GM10248 (cell line): ENCODE measurements at regions of chr18 and their contacts with region 1.

Region 1: DNA sequence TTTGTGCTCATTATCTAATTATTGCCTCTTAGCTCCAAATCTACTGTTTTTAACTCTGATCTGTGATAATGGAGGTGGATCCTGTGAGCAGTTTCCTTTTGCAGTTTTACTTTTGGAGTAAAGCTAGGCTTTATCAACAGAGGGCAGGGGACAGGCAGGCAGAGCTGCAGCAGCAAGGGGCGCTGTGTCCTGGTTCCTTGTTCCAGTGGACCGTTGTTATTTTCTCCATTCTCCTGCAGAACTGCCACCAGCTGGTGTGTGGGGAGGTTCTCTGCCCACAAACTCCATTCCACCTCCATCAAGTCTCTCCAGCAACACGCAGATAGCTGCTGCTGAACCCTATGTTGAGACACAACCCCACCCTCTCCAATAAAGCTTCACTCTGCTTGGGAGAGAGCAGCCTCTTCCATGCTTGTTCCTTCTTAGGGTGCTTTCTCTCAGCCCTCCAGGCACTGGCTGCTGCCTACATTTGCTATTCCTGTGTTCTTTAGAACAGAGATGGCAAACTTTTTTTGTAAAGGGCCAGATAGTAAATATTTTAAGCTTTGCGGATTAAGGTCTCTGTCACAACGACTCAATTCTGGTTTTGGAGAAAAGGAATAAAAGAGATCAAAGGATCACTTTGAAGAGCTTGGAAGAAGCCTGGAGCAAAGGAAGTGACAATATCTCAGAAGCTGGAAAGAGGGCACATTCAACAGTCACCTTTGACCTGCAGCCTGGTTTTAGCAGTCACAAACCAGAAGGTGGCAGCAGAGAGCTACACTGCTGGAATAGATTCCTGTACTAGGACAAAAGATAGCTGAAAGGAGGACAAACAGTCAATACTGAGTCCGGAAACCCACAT is 208.8 kb downstream of the CCDC178 start:
- DNase-seq: peak; percentile 47
- CTCF ChIP-seq: peak; percentile 88

Region 2: DNA sequence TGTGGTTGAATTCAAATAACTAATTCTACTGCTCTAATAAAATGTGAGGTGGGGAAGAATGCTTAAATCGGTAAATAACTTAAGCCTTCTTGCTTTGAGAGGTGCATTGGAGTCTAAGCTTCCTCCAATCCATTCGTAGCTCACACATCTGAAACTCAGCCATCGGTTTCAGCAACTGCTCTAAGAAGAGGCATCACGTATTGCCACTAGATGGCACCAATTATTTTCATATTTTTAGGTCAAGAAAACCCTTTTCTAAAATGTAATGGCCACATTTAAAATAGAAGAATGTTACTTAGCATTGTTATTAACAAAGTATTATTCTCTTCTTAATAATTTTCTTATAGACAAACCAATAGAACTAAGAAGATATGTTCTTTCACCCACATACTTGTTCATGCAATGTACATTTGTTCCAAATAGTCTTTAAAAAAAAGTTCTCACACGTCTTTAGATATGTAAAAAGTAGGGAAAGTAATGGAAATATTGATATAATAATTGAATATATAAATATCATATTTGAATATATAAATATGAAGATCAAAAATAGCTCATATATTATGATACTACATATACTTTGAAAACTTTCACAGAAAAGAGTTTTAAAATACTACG is 21.0 kb before region 1 on chr18:
- CTCF ChIA-PET with region 1: interaction called, 33 read pairs
- POLR2A ChIA-PET with region 1: no interaction called
- DNase-seq: no peak
- CTCF ChIP-seq: peak; percentile 57

Region 3: GRCh38 chr18:33495278-33495677 is 263.6 kb after region 1 on chr18:
- CTCF ChIA-PET with region 1: interaction called, 12 read pairs
- POLR2A ChIA-PET with region 1: no interaction called
- DNase-seq: no peak
- CTCF ChIP-seq: peak; percentile 16

Region 4: DNA sequence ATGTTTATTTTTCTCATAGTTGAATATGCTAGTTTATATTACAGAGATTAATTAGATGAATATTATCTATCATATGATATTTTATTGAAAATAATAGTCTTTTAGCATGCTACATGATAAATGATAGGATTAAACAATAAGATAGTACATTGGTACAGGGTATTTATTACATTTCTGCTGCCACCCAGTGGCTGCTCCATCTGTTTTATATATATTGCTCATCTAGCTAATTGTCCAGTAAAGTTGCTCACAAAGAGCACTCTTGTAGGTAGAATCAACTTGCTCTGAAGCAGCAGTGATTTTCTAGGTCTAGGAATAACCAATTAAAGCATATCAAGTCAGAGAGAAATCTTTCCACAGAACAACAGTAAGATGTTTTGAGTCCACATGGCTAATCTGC is 529.7 kb after region 1 on chr18:
- CTCF ChIA-PET with region 1: interaction called, 22 read pairs
- POLR2A ChIA-PET with region 1: no interaction called
- DNase-seq: no peak
- CTCF ChIP-seq: peak; percentile 55

Region 5: DNA sequence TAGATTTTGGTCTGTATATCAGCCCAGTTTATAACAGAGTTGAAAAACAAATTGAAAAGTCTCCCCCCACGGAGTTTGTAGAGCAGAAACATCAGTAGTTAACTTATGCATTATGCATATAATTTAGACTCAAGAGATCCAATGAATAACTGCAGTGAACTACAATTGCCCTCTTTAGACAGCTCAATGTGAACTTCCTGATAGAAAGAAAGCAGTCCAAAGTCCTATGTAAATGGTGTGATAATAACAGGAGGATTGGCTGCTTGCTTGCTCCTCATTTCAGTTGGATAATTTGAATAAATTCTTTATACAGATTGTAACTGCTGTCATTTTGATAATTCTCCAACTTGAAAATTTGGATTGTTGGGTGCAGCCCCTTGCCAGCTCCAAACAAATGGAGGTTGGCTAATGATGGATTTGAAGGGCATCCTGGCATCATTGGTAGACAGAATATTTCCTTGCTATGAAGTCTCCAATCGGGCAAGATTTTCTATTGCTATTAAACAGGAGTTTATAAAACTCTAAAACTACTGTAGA is 643.4 kb after region 1 on chr18:
- CTCF ChIA-PET with region 1: no interaction called
- POLR2A ChIA-PET with region 1: no interaction called
- DNase-seq: no peak
- CTCF ChIP-seq: no peak